ENCODE measurements at regions of chr19 and their contacts with region 1.

Region 1: DNA sequence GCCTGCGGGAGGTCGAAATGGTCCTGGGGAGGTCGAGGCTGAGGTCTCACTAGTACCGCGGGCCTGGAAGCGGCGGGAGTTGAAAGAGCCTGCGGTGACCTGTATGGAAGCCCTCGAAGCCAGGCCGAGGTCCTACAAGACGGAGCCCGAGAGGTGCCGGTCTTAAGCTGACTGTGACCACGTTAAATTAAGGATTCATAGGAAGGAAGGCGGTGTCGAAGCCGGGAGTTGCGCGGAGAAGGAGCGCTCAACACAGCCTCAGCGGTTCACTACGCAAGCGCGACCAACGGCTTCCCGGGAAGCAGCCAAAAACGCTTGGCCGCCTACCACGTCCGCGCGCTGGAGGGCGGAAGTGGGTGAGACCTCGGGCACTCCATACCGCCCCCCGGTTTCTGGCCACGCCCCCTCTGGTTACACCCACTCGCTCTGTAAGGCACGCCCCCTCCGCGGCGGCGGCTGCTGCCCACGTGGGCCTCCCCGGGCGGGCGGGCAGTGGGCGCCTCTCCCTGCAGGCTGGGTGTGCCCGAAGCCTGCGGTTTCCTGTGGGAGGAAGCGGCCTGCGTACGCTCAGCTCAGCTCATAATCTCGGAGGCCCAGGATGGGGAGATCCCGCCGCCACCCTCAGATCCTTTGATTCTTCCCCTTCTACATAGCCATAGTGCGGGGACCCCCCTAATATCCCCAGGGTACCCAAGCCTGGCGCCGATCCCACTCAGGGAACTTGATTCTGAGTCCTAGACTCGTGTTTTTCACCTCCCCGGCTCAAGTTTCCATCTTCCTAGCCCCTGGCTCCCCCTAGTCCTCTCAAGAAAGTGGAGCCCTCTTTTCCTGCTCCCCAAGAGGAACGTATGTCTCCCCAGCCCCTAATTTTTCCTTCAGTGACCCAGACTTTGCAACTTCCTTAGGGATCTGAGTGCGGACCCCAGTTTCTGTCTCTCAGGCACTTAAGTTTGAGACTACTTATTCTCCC is 3.4 kb upstream of the EMP3 start:
- DNase-seq: peak; percentile 99 to 100 (median 100)
- H3K4me3 ChIP-seq: peak overlapping the region; percentile 83 to 87
- H3K4me3 Mint-ChIP-seq: peak overlapping the region; percentile 91 to 95 (median 92)
- H3K27ac ChIP-seq: peak overlapping the region; percentile 100
- H3K27ac Mint-ChIP-seq: peak overlapping the region; percentile 98 to 100 (median 100)
- H3K4me1 ChIP-seq: peaks cover 55% of the 10 kb centered on the region
- H3K4me1 Mint-ChIP-seq: peaks cover 32 to 71% (median 49%) of the 10 kb centered on the region in 4 donors
- H3K27me3 ChIP-seq: no peaks in the 10 kb centered on the region
- H3K27me3 Mint-ChIP-seq: no peaks in the 10 kb centered on the region

Region 2: DNA sequence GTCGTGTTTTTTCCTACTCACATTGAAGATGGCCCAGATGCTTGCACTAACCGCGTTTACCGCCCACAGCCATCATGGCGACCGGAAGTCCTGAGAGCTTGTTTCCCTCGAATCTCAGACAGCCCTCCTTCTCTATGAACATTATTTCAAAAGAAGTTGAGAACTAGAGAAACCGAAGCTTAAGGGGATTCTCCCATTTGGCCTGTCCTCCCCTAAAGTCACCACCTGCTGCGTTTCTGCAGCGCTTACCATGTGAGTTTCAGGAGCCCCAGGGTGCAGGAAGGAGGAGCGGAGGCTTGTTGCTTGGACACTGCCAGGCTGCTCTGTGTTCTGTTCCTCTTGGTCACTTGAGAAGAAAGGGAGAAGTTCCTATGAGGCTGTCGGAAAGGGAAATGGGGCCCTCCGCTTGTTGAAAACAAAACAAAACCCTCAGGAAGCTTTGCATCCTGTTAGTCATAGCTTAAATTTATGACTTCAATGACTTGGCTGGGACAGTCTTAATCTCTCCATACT is 72.3 kb before region 1 on chr19:
- CTCF ChIA-PET with region 1: no interaction called
- POLR2A ChIA-PET with region 1: interaction called, 11 read pairs
- intact Hi-C with region 1: no loop called
- DNase-seq: peak; percentile 74 to 88 (median 76)
- H3K4me3 ChIP-seq: peak overlapping the region; percentile 48 to 87
- H3K4me3 Mint-ChIP-seq: peak overlapping the region; percentile 91 to 97 (median 94)
- H3K27ac ChIP-seq: peak overlapping the region; percentile 93
- H3K27ac Mint-ChIP-seq: peak overlapping the region; percentile 98 to 99 (median 98)
- H3K4me1 ChIP-seq: peaks cover 89% of the 10 kb centered on the region
- H3K4me1 Mint-ChIP-seq: peaks cover 56 to 87% (median 69%) of the 10 kb centered on the region in 4 donors
- H3K27me3 ChIP-seq: no peaks in the 10 kb centered on the region
- H3K27me3 Mint-ChIP-seq: no peaks in the 10 kb centered on the region

Region 3: GRCh38 chr19:48363810-48364563 is 42.1 kb after region 1 on chr19 and contains the starts of genes SYNGR4 and TMEM143:
- CTCF ChIA-PET with region 1: interaction called, 8 read pairs
- POLR2A ChIA-PET with region 1: interaction called, 43 read pairs
- intact Hi-C with region 1: loop called (anchors 1 kb)
- DNase-seq: peak; percentile 98 to 99 (median 99)
- H3K4me3 ChIP-seq: peak within 1 kb of the TSS; percentile 93 to 94
- H3K4me3 Mint-ChIP-seq: peak within 1 kb of the TSS; percentile 87 to 96 (median 94)
- H3K27ac ChIP-seq: peak within 1 kb of the TSS; percentile 88
- H3K27ac Mint-ChIP-seq: peak within 1 kb of the TSS; percentile 87 to 98 (median 92)
- H3K4me1 ChIP-seq: peaks cover 17% of the 10 kb centered on the region
- H3K4me1 Mint-ChIP-seq: peaks cover 4 to 14% (median 5%) of the 10 kb centered on the region in 4 donors
- H3K27me3 ChIP-seq: no peaks in the 10 kb centered on the region
- H3K27me3 Mint-ChIP-seq: no peaks in the 10 kb centered on the region
- total RNA-seq, gene SYNGR4: not detected
- total RNA-seq, gene TMEM143: 27.6 to 31.8 TPM

Region 4: DNA sequence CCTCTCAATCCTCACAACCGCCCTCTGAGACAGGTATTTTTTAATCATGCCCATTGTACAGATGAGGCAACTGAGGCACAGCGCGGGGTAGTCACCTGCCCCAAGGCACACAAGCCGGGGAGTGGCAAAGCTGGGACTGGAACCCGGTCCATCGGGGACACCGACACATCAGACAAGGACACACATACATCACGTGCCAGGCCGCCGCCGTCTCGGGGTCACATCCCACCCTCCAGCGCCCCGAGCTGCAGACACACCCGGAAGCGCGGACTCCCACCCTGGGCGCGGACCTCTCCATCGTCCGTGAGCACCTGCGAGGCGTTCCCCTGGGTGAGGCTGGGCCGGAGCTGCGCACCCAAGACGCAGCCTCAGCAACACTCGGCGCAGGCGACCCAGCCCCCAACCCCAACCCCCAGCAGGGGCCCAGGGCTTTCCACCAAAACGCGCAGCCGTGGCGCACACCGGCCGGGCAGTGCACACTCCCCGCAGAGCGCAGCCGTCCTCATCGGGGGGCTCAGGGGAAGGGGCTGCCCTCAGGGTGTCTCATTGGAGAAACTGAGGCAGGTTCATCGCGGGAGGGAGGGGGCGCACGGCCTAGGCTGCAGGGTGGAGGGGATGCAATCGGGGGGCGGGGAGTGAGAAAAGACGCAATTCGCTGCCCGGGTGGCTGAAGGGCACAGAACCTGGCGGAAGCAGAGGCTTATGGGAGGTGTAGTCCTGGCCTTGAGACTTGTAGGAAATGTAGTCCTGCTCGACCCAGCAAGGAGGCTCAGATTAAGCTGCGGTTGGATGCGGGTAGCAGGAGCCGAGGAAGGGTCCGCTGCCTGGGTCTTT is 191.6 kb after region 1 on chr19:
- CTCF ChIA-PET with region 1: no interaction called
- POLR2A ChIA-PET with region 1: interaction called, 3 read pairs
- intact Hi-C with region 1: loop called (anchors 2 kb)
- DNase-seq: peak; percentile 70 to 88 (median 73)
- H3K4me3 ChIP-seq: peak overlapping the region; percentile 65 to 89
- H3K4me3 Mint-ChIP-seq: no peak overlapping the region
- H3K27ac ChIP-seq: peak overlapping the region; percentile 59
- H3K27ac Mint-ChIP-seq: peak overlapping the region in 3 of 7 donors; percentile 68 to 96 (median 91)
- H3K4me1 ChIP-seq: peaks cover 27% of the 10 kb centered on the region
- H3K4me1 Mint-ChIP-seq: peaks cover 6 to 16% (median 11%) of the 10 kb centered on the region in 4 donors
- H3K27me3 ChIP-seq: no peaks in the 10 kb centered on the region
- H3K27me3 Mint-ChIP-seq: no peaks in the 10 kb centered on the region

Region 5: GRCh38 chr19:48637170-48637947 is 315.5 kb after region 1 on chr19 and contains the start of gene DBP:
- CTCF ChIA-PET with region 1: no interaction called
- POLR2A ChIA-PET with region 1: no interaction called
- intact Hi-C with region 1: loop called (anchors 2 kb)
- DNase-seq: peak in 4 of 5 donors; percentile 99 to 100 (median 100)
- H3K4me3 ChIP-seq: peak within 1 kb of the TSS; percentile 52 to 88
- H3K4me3 Mint-ChIP-seq: peak within 1 kb of the TSS; percentile 89 to 100 (median 99)
- H3K27ac ChIP-seq: peak within 1 kb of the TSS; percentile 88
- H3K27ac Mint-ChIP-seq: peak within 1 kb of the TSS; percentile 93 to 100 (median 99)
- H3K4me1 ChIP-seq: peaks cover 46% of the 10 kb centered on the region
- H3K4me1 Mint-ChIP-seq: peaks cover 20 to 55% (median 40%) of the 10 kb centered on the region in 4 donors
- H3K27me3 ChIP-seq: no peaks in the 10 kb centered on the region
- H3K27me3 Mint-ChIP-seq: no peaks in the 10 kb centered on the region
- total RNA-seq, gene DBP: 62.6 to 69.5 TPM

Region 6: DNA sequence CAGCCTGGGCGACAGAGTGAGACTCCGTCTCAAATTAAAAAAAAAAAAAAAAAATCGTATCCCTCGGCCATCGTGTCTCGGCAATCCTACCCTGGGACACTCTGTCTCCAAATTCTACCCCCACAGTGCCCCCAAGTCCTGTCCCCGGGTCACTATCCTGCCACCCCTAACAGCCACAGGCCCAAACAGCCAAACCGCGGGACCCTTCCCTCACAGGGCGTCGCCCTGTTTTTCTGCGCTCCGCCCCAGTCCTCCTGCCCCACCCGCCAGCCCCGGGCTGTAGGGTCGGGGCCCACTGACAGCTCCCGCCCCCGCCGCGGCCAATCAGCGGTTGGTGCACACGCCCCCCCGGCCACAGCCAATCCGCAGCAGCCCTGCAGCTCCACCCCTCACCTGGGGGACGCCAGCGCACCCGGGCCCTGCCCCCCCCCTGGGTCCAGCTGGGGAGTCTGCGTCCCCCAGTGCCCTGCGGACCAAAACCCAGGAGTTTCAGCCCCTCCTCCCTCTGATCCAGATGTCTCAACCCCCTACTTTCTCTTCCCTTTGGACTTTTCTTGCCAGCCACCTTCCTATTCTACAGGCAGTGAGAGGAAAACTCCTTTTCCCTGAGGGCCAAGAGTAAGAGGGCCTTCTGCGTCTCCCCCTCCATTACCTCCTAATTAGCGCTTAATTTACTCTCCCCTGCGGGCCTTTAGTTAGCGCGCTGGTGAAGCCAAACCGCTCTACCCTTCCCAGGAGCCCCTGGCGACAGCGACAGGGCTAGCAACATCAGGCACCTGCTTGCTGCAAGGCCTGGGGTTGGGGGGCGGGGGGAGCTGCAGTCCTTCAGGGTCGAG is 490.4 kb after region 1 on chr19:
- CTCF ChIA-PET with region 1: no interaction called
- POLR2A ChIA-PET with region 1: no interaction called
- intact Hi-C with region 1: no loop called
- DNase-seq: peak; percentile 48 to 55 (median 50)
- H3K4me3 ChIP-seq: no peak overlapping the region
- H3K4me3 Mint-ChIP-seq: peak overlapping the region; percentile 79 to 87 (median 84)
- H3K27ac ChIP-seq: no peak overlapping the region
- H3K27ac Mint-ChIP-seq: peak overlapping the region in 6 of 7 donors; percentile 10 to 91 (median 80)
- H3K4me1 ChIP-seq: peaks cover 13% of the 10 kb centered on the region
- H3K4me1 Mint-ChIP-seq: peaks cover 21 to 51% (median 36%) of the 10 kb centered on the region in 4 donors
- H3K27me3 ChIP-seq: no peaks in the 10 kb centered on the region
- H3K27me3 Mint-ChIP-seq: no peaks in the 10 kb centered on the region